HepG2 (cell line): ENCODE measurements at regions of chr6 and their contacts with region 1.

Region 1: DNA sequence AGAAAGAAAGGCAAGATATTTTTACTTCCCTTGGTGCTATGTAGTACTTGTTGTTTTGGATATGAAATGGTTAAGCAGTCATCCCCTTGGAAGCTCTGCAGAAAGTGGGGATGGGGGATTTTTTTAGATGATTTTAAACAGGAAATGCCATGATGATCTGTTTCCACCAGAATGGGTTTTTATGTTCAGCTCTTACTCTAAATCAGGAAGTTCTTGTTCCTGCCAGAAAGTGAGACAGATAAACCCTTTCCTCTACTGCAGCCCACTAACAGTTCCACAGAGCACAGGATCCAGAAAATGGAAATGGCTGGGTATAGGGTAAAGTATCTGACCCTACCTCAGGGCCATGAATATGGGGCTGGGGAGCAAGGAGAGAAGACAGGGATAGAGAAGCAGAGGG is 32.1 kb upstream of the PPP1R3G start:
- DNase-seq: no peak
- ATAC-seq: no peak
- H3K4me3 ChIP-seq: no peak overlapping the region
- H3K27ac ChIP-seq: no peak overlapping the region
- H3K4me1 ChIP-seq: peaks cover 10% of the 10 kb centered on the region
- H3K27me3 ChIP-seq: no peaks in the 10 kb centered on the region
- CTCF ChIP-seq: no peak
- EP300 ChIP-seq: no peak
- POLR2A ChIP-seq: no peak
- RAD21 ChIP-seq: no peak

Region 2: GRCh38 chr6:4853782-4854511 is 199.1 kb before region 1 on chr6:
- CTCF ChIA-PET with region 1: no interaction called
- POLR2A ChIA-PET with region 1: no interaction called
- in situ Hi-C with region 1: no loop called
- intact Hi-C with region 1: no loop called
- DNase-seq: peak; percentile 73
- ATAC-seq: peak; percentile 93
- H3K4me3 ChIP-seq: no peak overlapping the region
- H3K27ac ChIP-seq: no peak overlapping the region
- H3K4me1 ChIP-seq: peaks cover 16% of the 10 kb centered on the region
- H3K27me3 ChIP-seq: no peaks in the 10 kb centered on the region
- CTCF ChIP-seq: no peak
- EP300 ChIP-seq: no peak
- POLR2A ChIP-seq: no peak
- RAD21 ChIP-seq: no peak; the same call in 1 of the 2 replicates

Region 3: GRCh38 chr6:5115168-5115567 is 62.1 kb after region 1 on chr6:
- CTCF ChIA-PET with region 1: interaction called, 56 read pairs
- POLR2A ChIA-PET with region 1: interaction called, 6 read pairs
- in situ Hi-C with region 1: loop called (anchors 5 kb)
- intact Hi-C with region 1: loop called (anchors 1 kb)
- DNase-seq: peak; percentile 91
- ATAC-seq: peak; percentile 94
- H3K4me3 ChIP-seq: no peak overlapping the region
- H3K27ac ChIP-seq: peak overlapping the region; percentile 10
- H3K4me1 ChIP-seq: peaks cover 39% of the 10 kb centered on the region
- H3K27me3 ChIP-seq: no peaks in the 10 kb centered on the region
- CTCF ChIP-seq: peak; percentile 88
- EP300 ChIP-seq: peak in 1 of 2 experiments; percentile 75; a peak in 2 of 4 replicates
- POLR2A ChIP-seq: no peak
- RAD21 ChIP-seq: peak; percentile 88

Region 4: GRCh38 chr6:5302995-5303622 is 250.1 kb after region 1 on chr6:
- CTCF ChIA-PET with region 1: interaction called, 10 read pairs
- POLR2A ChIA-PET with region 1: no interaction called
- in situ Hi-C with region 1: no loop called
- intact Hi-C with region 1: loop called (anchors 1 kb)
- DNase-seq: peak; percentile 73
- ATAC-seq: peak; percentile 100
- H3K4me3 ChIP-seq: no peak overlapping the region
- H3K27ac ChIP-seq: no peak overlapping the region
- H3K4me1 ChIP-seq: peaks cover 16% of the 10 kb centered on the region
- H3K27me3 ChIP-seq: no peaks in the 10 kb centered on the region
- CTCF ChIP-seq: peak; percentile 88
- EP300 ChIP-seq: no peak
- POLR2A ChIP-seq: no peak
- RAD21 ChIP-seq: peak; percentile 83

Region 5: DNA sequence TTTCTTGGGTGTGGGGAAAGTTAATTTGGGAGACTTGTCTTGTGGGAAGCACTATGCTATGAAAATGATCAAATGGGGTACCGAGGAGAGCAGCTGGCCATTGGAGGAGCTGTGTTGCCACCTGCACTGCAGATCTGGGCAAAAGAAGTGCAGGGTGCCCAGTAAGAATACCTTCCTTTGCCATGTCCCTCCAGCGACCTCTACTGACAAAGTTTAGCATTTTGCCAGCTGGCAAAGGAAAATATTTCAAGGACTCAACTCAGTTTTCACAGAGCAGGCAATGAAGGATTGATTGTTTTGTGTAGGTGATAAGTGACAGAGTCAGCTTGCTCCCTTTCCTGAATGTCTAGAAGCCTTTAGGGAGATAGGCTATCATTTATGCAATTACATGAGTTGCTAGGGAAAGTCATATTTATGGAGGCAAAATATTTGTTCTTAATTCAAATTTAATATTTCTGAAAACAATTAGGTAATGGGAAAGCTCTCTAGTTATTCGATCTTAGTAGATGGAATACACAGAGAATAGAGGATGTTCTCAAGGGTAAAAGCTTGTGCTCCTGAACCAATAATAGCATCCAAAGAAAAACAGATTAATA is 326.7 kb after region 1 on chr6:
- CTCF ChIA-PET with region 1: interaction called, 3 read pairs
- POLR2A ChIA-PET with region 1: no interaction called
- in situ Hi-C with region 1: loop called (anchors 10 kb)
- intact Hi-C with region 1: no loop called
- DNase-seq: peak; percentile 71
- ATAC-seq: peak; percentile 80
- H3K4me3 ChIP-seq: no peak overlapping the region
- H3K27ac ChIP-seq: no peak overlapping the region
- H3K4me1 ChIP-seq: no peaks in the 10 kb centered on the region
- H3K27me3 ChIP-seq: no peaks in the 10 kb centered on the region
- CTCF ChIP-seq: peak; percentile 90
- EP300 ChIP-seq: no peak
- POLR2A ChIP-seq: no peak
- RAD21 ChIP-seq: peak; percentile 73